Activated CD4-positive, alpha-beta T cell treated with anti-CD3 and anti-CD28 coated beads for 36 hours (primary cell): ENCODE measurements at regions of chr11 and their contacts with region 1.

Region 1: GRCh38 chr11:61384271-61385242 is 7.8 kb upstream of the TMEM216 start:
- DNase-seq: no peak
- ATAC-seq: no peak
- H3K4me3 Mint-ChIP-seq: no peak overlapping the region
- H3K27ac Mint-ChIP-seq: no peak overlapping the region
- H3K4me1 Mint-ChIP-seq: peaks cover 3% of the 10 kb centered on the region
- H3K27me3 Mint-ChIP-seq: no peaks in the 10 kb centered on the region

Region 2: GRCh38 chr11:61403658-61404057 is 19.1 kb after region 1 on chr11:
- CTCF ChIA-PET with region 1: interaction called, 30 read pairs
- POLR2A ChIA-PET with region 1: no interaction called
- intact Hi-C with region 1: no loop called
- DNase-seq: no peak
- ATAC-seq: no peak
- H3K4me3 Mint-ChIP-seq: no peak overlapping the region
- H3K27ac Mint-ChIP-seq: no peak overlapping the region
- H3K4me1 Mint-ChIP-seq: peaks cover 3% of the 10 kb centered on the region
- H3K27me3 Mint-ChIP-seq: no peaks in the 10 kb centered on the region

Region 3: DNA sequence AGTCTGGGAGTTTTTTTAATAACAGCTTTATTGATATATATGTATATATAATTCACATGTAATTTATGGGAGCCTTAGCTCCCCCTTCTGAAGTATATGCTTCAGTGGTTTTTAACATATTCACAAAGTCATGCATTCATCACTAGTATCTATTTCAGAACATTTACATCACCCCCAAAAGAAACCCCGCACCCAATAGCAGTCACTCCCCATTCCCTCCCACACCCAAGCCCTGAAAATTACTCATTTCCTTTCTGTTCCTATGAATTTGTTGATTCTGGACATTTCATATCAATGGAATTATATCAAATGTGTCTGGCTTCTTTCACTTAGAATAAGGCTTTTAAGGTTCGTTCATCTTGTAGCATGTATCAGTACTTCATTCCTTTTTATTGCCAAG is 231.9 kb after region 1 on chr11:
- CTCF ChIA-PET with region 1: no interaction called
- POLR2A ChIA-PET with region 1: no interaction called
- intact Hi-C with region 1: no loop called
- DNase-seq: no peak
- ATAC-seq: no peak
- H3K4me3 Mint-ChIP-seq: no peak overlapping the region
- H3K27ac Mint-ChIP-seq: no peak overlapping the region
- H3K4me1 Mint-ChIP-seq: peaks cover 4% of the 10 kb centered on the region
- H3K27me3 Mint-ChIP-seq: peaks cover 15% of the 10 kb centered on the region